Mammary epithelial cell (primary cell): ENCODE measurements at regions of chr12 and their contacts with region 1.

Region 1: DNA sequence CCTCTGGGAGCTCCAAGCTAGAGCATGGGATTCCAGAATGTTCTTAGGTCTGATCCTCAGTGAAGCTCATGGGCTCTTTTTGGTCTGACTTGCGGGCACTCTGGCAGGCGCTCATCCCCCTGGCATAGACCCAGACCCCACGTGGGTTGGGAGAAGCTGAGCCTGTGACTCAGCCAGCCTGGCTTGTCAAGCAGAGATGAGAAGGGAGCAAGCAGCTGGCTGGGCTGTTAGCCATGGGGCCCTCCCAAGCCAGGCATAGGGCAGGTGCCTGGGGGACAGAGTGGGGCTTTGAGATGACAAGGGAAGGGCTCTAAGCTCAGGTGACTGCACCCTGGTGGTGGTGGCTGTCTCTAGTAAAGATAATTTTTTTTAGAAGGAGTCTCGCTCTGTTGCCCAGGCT is 80.3 kb upstream of the NOS1 start:
- DNase-seq: no peak
- H3K4me3 ChIP-seq: no peak overlapping the region
- H3K27ac ChIP-seq: no peak overlapping the region
- H3K4me1 ChIP-seq: no peaks in the 10 kb centered on the region
- H3K27me3 ChIP-seq: no peaks in the 10 kb centered on the region
- CTCF ChIP-seq: no peak

Region 2: DNA sequence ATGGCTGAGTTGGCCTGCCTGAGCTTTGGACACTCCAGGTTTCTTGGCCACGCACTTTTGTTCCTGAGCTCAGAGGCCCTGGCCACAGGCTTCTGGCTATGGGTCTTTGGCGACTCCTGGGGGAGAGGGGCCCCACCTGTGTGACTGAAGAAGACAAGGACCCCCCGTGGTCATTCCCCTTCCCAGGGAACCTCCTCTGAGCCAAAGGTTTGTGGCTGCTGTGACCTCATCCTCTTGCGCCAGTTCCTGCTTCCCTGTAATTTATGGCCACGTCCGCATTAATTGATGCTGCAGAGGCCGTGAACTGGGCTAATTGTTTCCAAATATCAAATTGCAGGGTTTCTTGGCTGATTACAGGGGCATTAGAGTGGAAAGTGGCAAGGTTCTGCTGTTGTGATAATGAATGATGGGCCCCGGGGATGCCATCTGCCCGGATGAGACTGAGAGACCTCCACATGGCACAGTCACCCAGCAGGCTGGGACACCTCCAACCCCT is 52.8 kb before region 1 on chr12:
- CTCF ChIA-PET with region 1: no interaction called
- dilution Hi-C with region 1: loop called (anchors 5 kb)
- in situ Hi-C with region 1: no loop called
- intact Hi-C with region 1: no loop called
- DNase-seq: no peak
- H3K4me3 ChIP-seq: no peak overlapping the region
- H3K27ac ChIP-seq: no peak overlapping the region
- H3K4me1 ChIP-seq: no peaks in the 10 kb centered on the region
- H3K27me3 ChIP-seq: no peaks in the 10 kb centered on the region
- CTCF ChIP-seq: no peak